ENCODE measurements at regions of chr11 and their contacts with region 1.

Region 1: GRCh38 chr11:119491753-119492510 is 69.0 kb upstream of the THY1 start:
- DNase-seq: no peak
- ATAC-seq: peak; percentile 20
- H3K4me3 Mint-ChIP-seq: no peak overlapping the region
- H3K27ac Mint-ChIP-seq: no peak overlapping the region
- H3K4me1 Mint-ChIP-seq: peaks cover 23% of the 10 kb centered on the region
- H3K27me3 Mint-ChIP-seq: no peaks in the 10 kb centered on the region
- CTCF ChIP-seq: no peak

Region 2: GRCh38 chr11:119381181-119381988 is 110.5 kb before region 1 on chr11 and contains the start of gene USP2:
- CTCF ChIA-PET with region 1: no interaction called
- POLR2A ChIA-PET with region 1: no interaction called
- DNase-seq: peak; percentile 98
- ATAC-seq: peak; percentile 83
- H3K4me3 Mint-ChIP-seq: no peak within 1 kb of the TSS
- H3K27ac Mint-ChIP-seq: peak within 1 kb of the TSS; percentile 12; the same call in 1 of the 2 replicates
- H3K4me1 Mint-ChIP-seq: peaks cover 40% of the 10 kb centered on the region
- H3K27me3 Mint-ChIP-seq: peaks cover 20% of the 10 kb centered on the region
- CTCF ChIP-seq: peak; percentile 24; the same call in 1 of the 2 replicates
- total RNA-seq, gene USP2: 7.3 to 8.2 TPM (median 8.0 TPM) in 3 replicates

Region 3: DNA sequence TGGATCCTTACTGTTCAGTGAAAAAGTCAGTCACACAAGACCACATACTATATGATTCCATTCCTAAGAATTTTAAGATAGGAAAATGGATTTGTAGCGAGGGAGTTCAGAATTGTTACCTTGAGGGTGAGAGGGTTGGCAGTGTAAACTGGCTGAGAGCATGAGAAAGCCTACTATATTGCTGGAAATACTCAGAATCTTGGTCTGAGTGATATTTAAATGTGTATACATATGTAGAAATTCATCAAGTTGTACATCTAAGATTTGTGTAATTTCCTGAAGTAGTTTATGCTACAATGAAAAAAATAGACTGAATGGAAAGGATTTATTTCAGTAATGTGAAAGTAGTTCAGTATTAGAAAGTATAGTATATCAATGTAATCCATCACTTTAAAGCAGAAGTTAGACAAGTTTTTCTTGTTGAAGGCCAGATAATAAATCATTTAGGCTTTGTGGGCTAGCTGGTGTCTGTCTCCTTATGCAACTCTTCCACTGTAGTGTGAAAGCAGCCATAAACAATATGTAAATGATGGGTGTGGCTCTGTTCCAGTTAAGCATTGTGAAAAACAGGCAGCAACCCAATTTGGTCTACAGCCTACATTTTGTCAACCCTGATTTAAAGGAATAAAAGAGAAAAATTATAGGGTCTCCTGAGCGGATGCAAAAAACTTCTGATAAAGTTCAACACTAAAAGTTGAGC is 58.3 kb after region 1 on chr11:
- CTCF ChIA-PET with region 1: no interaction called
- POLR2A ChIA-PET with region 1: no interaction called
- DNase-seq: no peak
- ATAC-seq: no peak
- H3K4me3 Mint-ChIP-seq: no peak overlapping the region
- H3K27ac Mint-ChIP-seq: no peak overlapping the region
- H3K4me1 Mint-ChIP-seq: peaks cover 10% of the 10 kb centered on the region
- H3K27me3 Mint-ChIP-seq: no peaks in the 10 kb centered on the region
- CTCF ChIP-seq: no peak

Region 4: DNA sequence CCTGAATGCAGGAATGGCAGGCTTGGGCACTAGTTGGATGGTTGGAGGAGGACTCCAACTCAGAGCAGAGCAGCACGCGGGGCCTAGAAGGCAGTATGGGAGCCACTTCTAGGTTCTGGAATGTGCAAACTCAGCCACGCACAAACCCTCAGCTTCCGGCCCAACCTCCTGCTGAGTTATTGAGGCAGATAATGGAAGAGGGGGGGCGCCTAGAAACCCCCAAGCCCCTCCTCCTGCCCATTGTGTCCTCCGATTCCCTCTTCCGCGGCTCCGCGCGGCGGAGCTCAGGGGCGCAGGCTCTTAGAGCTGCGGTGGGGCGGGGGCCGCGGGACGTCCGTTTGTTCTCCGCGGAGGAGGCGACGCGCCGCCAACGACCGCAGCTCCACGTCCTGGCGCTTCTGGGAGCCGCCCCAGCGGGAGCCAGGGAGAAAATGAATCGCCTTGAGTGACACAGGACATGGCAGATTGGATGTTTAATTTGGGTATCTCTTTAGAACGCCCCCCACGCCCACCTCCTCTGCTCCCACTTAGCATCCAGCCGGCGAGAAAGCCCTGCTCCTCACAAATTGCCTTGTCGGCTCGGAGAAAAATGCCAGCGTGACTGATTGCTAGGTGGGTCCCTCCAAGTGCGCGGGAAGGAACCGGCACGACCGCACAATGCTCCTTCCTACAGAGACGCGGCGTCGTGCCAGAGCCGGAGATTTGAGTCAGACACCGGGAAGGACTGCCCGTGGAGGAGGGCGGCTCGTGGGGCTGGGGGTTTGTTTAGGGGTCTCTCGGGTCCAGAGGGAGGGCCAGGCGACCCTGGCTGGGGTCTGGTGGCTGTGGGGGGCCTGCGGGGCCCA is 92.5 kb after region 1 on chr11:
- CTCF ChIA-PET with region 1: interaction called, 11 read pairs
- POLR2A ChIA-PET with region 1: no interaction called
- DNase-seq: peak; percentile 83
- ATAC-seq: peak; percentile 81
- H3K4me3 Mint-ChIP-seq: peak overlapping the region; percentile 75
- H3K27ac Mint-ChIP-seq: no peak overlapping the region
- H3K4me1 Mint-ChIP-seq: peaks cover 16% of the 10 kb centered on the region
- H3K27me3 Mint-ChIP-seq: peaks cover 44% of the 10 kb centered on the region
- CTCF ChIP-seq: no peak

Measured in WTC11 (cell line).